GM12878 (cell line): ENCODE measurements at regions of chr6 and their contacts with region 1.

Region 1: DNA sequence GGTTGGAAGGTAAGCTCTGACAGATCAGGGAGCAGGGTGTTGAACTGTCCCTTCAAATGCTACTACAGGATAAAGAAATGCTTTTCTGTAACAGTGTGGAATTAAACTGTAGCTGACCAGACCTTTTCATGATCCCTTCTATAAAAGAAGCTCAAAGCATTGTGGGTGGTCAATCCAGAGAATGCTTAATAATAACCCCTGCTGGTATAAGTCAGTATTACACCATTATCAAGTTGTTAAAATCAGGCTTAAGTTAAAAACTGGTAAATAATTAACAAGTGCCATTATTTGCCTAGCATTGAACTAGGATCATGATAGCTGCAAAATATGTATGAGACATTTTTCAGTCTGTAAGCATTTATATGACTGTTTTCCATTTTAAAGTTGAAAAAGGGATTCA is 468.9 kb downstream of the PKHD1 start:
- DNase-seq: no peak
- ATAC-seq: peak; percentile 69
- H3K4me3 ChIP-seq: no peak overlapping the region
- H3K27ac ChIP-seq: no peak overlapping the region
- H3K4me1 ChIP-seq: no peaks in the 10 kb centered on the region
- H3K27me3 ChIP-seq: no peaks in the 10 kb centered on the region; a peak in 1 of 4 replicates
- CTCF ChIP-seq: peak in 2 of 3 experiments; percentile 24 to 32; a peak in 3 of 6 replicates
- EP300 ChIP-seq: no peak
- POLR2A ChIP-seq: no peak
- RAD21 ChIP-seq: no peak

Region 2: GRCh38 chr6:51273228-51273940 is 345.2 kb before region 1 on chr6:
- CTCF ChIA-PET with region 1: no interaction called
- POLR2A ChIA-PET with region 1: no interaction called
- RAD21 ChIA-PET with region 1: no interaction called
- SMC1A ChIA-PET with region 1: no interaction called
- in situ Hi-C with region 1: no loop called
- intact Hi-C with region 1: no loop called
- DNase-seq: no peak
- ATAC-seq: no peak
- H3K4me3 ChIP-seq: no peak overlapping the region
- H3K27ac ChIP-seq: no peak overlapping the region
- H3K4me1 ChIP-seq: no peaks in the 10 kb centered on the region
- H3K27me3 ChIP-seq: no peaks in the 10 kb centered on the region
- CTCF ChIP-seq: no peak
- EP300 ChIP-seq: no peak
- POLR2A ChIP-seq: no peak
- RAD21 ChIP-seq: no peak

Region 3: GRCh38 chr6:51633424-51633823 is 14.9 kb after region 1 on chr6:
- CTCF ChIA-PET with region 1: interaction called, 11 read pairs
- POLR2A ChIA-PET with region 1: interaction called, 5 read pairs
- RAD21 ChIA-PET with region 1: no interaction called
- SMC1A ChIA-PET with region 1: interaction called, 4 read pairs
- in situ Hi-C with region 1: no loop called
- intact Hi-C with region 1: no loop called
- DNase-seq: no peak
- ATAC-seq: no peak
- H3K4me3 ChIP-seq: no peak overlapping the region
- H3K27ac ChIP-seq: no peak overlapping the region
- H3K4me1 ChIP-seq: no peaks in the 10 kb centered on the region
- H3K27me3 ChIP-seq: no peaks in the 10 kb centered on the region
- CTCF ChIP-seq: no peak
- EP300 ChIP-seq: no peak
- POLR2A ChIP-seq: no peak
- RAD21 ChIP-seq: no peak

Region 4: GRCh38 chr6:52286798-52287432 is 668.4 kb after region 1 on chr6:
- CTCF ChIA-PET with region 1: no interaction called
- POLR2A ChIA-PET with region 1: no interaction called
- RAD21 ChIA-PET with region 1: no interaction called
- SMC1A ChIA-PET with region 1: no interaction called
- in situ Hi-C with region 1: no loop called
- intact Hi-C with region 1: no loop called
- DNase-seq: no peak
- ATAC-seq: peak; percentile 8; the same call in 2 of the 3 replicates
- H3K4me3 ChIP-seq: no peak overlapping the region
- H3K27ac ChIP-seq: no peak overlapping the region
- H3K4me1 ChIP-seq: peaks cover 8% of the 10 kb centered on the region; the same call in 1 of the 2 replicates
- H3K27me3 ChIP-seq: no peaks in the 10 kb centered on the region
- CTCF ChIP-seq: peak; percentile 67 to 72 (median 69)
- EP300 ChIP-seq: no peak
- POLR2A ChIP-seq: no peak
- RAD21 ChIP-seq: peak; percentile 93